PC-3 (cell line): ENCODE measurements at regions of chr9 and their contacts with region 1.

Region 1: DNA sequence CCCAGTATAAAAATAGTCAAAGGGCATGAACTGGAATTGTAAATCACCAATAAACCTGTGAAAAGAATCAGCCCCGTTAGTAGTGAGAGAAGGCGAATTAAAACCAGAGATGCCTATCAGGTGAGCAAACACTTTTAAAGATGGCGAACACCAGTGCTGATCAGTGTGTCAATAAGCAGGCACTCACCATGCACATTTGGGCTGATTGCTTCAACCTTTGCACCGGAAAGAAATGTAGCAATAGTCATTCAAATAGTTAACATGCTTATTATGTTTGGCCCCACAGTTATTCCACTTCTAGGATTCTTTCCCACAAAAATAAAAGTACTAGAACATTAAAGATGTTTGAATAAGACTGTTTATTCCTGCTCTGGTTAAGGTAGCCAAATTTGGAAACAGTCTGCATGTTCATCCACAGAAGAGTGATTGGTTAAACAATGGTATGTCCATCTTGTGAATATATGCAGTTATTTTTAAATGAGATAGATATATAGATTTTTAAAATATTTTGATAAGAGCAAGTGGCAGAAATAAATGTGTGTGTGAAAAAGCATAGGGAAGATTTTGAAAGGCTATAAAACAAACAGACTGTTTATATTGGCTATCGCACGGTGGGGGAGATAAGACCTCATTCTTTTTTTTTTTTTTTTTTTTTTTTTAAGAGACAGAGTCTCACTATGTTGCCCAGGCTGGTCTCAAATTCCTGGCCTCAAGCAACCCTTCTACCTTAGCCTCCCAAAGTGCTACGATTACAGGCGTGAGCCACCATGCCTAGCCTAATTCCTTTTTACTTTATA is 112.2 kb downstream of the PIP5K1B start:
- DNase-seq: no peak
- ATAC-seq: no peak
- H3K4me3 ChIP-seq: no peak overlapping the region
- H3K27ac ChIP-seq: no peak overlapping the region
- H3K4me1 ChIP-seq: no peaks in the 10 kb centered on the region
- H3K27me3 ChIP-seq: peaks cover 19% of the 10 kb centered on the region
- CTCF ChIP-seq: no peak

Region 2: GRCh38 chr9:68473790-68474189 is 343.5 kb before region 1 on chr9:
- CTCF ChIA-PET with region 1: no interaction called
- POLR2A ChIA-PET with region 1: no interaction called
- intact Hi-C with region 1: no loop called
- DNase-seq: no peak
- ATAC-seq: no peak
- H3K4me3 ChIP-seq: no peak overlapping the region
- H3K27ac ChIP-seq: no peak overlapping the region
- H3K4me1 ChIP-seq: peaks cover 8% of the 10 kb centered on the region
- H3K27me3 ChIP-seq: no peaks in the 10 kb centered on the region
- CTCF ChIP-seq: no peak

Region 3: GRCh38 chr9:68749568-68750279 is 67.6 kb before region 1 on chr9:
- CTCF ChIA-PET with region 1: no interaction called
- POLR2A ChIA-PET with region 1: no interaction called
- intact Hi-C with region 1: loop called (anchors 10 kb)
- DNase-seq: no peak
- ATAC-seq: no peak
- H3K4me3 ChIP-seq: no peak overlapping the region
- H3K27ac ChIP-seq: no peak overlapping the region
- H3K4me1 ChIP-seq: no peaks in the 10 kb centered on the region
- H3K27me3 ChIP-seq: no peaks in the 10 kb centered on the region; the same call in 1 of the 2 replicates
- CTCF ChIP-seq: no peak

Region 4: DNA sequence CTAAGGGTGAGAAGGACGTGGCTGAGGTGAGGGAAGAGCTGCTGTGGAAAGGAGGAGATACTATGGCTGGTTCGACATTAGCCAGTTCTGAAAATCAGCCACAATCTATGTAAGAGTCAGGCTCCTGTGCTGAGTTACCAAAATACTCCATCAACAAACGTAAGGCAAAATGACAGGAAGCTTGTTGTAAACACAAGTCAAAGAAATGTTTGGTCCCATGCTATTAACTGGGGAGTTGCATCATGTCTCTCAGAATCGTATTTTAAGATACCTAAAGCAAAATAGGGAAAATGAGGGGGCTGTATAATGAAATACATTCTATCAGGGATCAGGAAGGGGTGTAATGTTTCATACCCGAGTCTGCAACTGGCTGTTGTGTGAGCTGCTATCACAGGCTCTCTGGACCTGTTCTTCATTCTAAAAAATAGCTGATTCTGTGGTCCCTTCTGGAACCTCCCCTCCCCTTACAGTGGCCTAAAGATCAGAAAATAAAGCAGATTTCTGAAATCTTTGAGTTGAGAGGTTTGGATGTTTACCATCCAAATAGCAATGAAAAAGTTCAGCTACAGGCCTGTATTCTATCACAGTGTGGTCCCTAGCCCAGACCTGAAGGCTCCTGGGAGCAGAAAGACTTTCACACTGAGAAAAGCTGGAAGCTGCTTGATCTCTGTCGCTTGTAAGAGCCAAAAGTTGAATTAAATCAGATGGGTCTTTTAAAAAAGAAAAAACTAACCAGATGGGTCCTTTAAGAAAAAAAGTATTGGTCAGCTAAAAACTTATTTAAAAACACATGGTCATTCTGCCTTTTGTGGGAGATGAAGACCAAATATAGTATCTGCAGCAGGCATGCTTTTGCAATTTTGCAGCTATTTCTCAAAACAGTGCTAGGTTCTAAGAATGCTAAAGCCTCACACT is 1343.7 kb after region 1 on chr9:
- CTCF ChIA-PET with region 1: no interaction called
- POLR2A ChIA-PET with region 1: no interaction called
- intact Hi-C with region 1: no loop called
- DNase-seq: no peak
- ATAC-seq: no peak
- H3K4me3 ChIP-seq: no peak overlapping the region
- H3K27ac ChIP-seq: no peak overlapping the region
- H3K4me1 ChIP-seq: no peaks in the 10 kb centered on the region
- H3K27me3 ChIP-seq: no peaks in the 10 kb centered on the region
- CTCF ChIP-seq: no peak